Colonic mucosa (tissue), 4 donors: ENCODE measurements at regions of chr9 and their contacts with region 1.

Region 1: GRCh38 chr9:15606643-15607472 is 54.0 kb downstream of the CCDC171 start:
- DNase-seq: peak; percentile 22
- H3K4me3 ChIP-seq: no peak overlapping the region
- H3K27ac ChIP-seq: no peak overlapping the region
- H3K4me1 ChIP-seq: no peaks in the 10 kb centered on the region
- H3K27me3 ChIP-seq: no peaks in the 10 kb centered on the region
- CTCF ChIP-seq: peak; percentile 78

Region 2: GRCh38 chr9:15104826-15105420 is 501.9 kb before region 1 on chr9:
- intact Hi-C with region 1: loop called (anchors 10 kb)
- DNase-seq: peak; percentile 33
- H3K4me3 ChIP-seq: no peak overlapping the region
- H3K27ac ChIP-seq: no peak overlapping the region
- H3K4me1 ChIP-seq: no peaks in the 10 kb centered on the region
- H3K27me3 ChIP-seq: no peaks in the 10 kb centered on the region
- CTCF ChIP-seq: peak; percentile 55

Region 3: GRCh38 chr9:15203581-15203980 is 403.3 kb before region 1 on chr9:
- intact Hi-C with region 1: loop called (anchors 5 kb)
- DNase-seq: no peak
- H3K4me3 ChIP-seq: no peak overlapping the region
- H3K27ac ChIP-seq: no peak overlapping the region
- H3K4me1 ChIP-seq: no peaks in the 10 kb centered on the region
- H3K27me3 ChIP-seq: no peaks in the 10 kb centered on the region
- CTCF ChIP-seq: no peak

Region 4: GRCh38 chr9:15485836-15486666 is 120.8 kb before region 1 on chr9:
- intact Hi-C with region 1: loop called (anchors 10 kb)
- DNase-seq: no peak
- H3K4me3 ChIP-seq: no peak overlapping the region
- H3K27ac ChIP-seq: no peak overlapping the region
- H3K4me1 ChIP-seq: no peaks in the 10 kb centered on the region
- H3K27me3 ChIP-seq: no peaks in the 10 kb centered on the region
- CTCF ChIP-seq: no peak

Region 5: DNA sequence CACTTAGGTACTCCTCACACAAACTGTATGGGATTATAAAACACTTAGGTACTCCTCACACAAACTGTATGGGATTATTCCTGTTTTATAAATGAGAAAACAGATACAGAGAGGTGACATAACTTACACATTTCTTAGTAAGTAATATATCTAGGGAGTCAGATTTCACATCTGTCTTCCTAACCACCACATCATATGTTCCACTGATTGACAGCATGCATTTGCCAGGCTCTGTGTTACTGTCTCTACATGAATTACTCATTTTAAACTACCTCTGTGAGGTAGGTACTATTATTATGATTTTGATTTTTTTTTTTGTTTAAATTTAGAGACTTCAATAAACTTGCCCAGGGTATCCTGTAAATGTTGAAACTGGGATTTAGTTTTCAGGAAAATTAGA is 178.7 kb after region 1 on chr9:
- intact Hi-C with region 1: no loop called
- DNase-seq: no peak
- H3K4me3 ChIP-seq: no peak overlapping the region
- H3K27ac ChIP-seq: no peak overlapping the region
- H3K4me1 ChIP-seq: no peaks in the 10 kb centered on the region
- H3K27me3 ChIP-seq: no peaks in the 10 kb centered on the region
- CTCF ChIP-seq: no peak